ENCODE measurements at regions of chr7 and their contacts with region 1.

Region 1: GRCh38 chr7:48088559-48089045 is 463 bp upstream of the UPP1 start:
- DNase-seq: peak; percentile 90
- ATAC-seq: peak; percentile 31
- H3K4me3 ChIP-seq: peak overlapping the region; percentile 91
- H3K27ac ChIP-seq: peak overlapping the region; percentile 94
- H3K4me1 ChIP-seq: peaks cover 22% of the 10 kb centered on the region
- H3K27me3 ChIP-seq: no peaks in the 10 kb centered on the region
- CTCF ChIP-seq: no peak
- POLR2A ChIP-seq: peak; percentile 68
- RAD21 ChIP-seq: no peak

Region 2: GRCh38 chr7:47968847-47969774 is 119.5 kb before region 1 on chr7:
- CTCF ChIA-PET with region 1: no interaction called
- POLR2A ChIA-PET with region 1: interaction called, 10 read pairs
- dilution Hi-C with region 1: no loop called
- in situ Hi-C with region 1: no loop called
- intact Hi-C with region 1: no loop called
- DNase-seq: peak; percentile 74
- ATAC-seq: peak; percentile 86
- H3K4me3 ChIP-seq: no peak overlapping the region
- H3K27ac ChIP-seq: no peak overlapping the region
- H3K4me1 ChIP-seq: peaks cover 7% of the 10 kb centered on the region; the same call in 1 of the 2 replicates
- H3K27me3 ChIP-seq: no peaks in the 10 kb centered on the region
- CTCF ChIP-seq: peak; percentile 83
- POLR2A ChIP-seq: no peak
- RAD21 ChIP-seq: peak; percentile 75

Region 3: GRCh38 chr7:47979145-47979831 is 109.3 kb before region 1 on chr7 and contains the start of gene HUS1:
- CTCF ChIA-PET with region 1: no interaction called
- POLR2A ChIA-PET with region 1: no interaction called
- dilution Hi-C with region 1: no loop called
- in situ Hi-C with region 1: loop called (anchors 10 kb)
- intact Hi-C with region 1: loop called (anchors 1 kb)
- DNase-seq: peak; percentile 81
- ATAC-seq: peak; percentile 100
- H3K4me3 ChIP-seq: peak within 1 kb of the TSS; percentile 84
- H3K27ac ChIP-seq: peak within 1 kb of the TSS; percentile 95
- H3K4me1 ChIP-seq: peaks cover 3% of the 10 kb centered on the region
- H3K27me3 ChIP-seq: peaks cover 2% of the 10 kb centered on the region; the same call in 1 of the 2 replicates
- CTCF ChIP-seq: no peak
- POLR2A ChIP-seq: peak; percentile 90
- RAD21 ChIP-seq: no peak
- total RNA-seq, gene HUS1: 18.3 and 31.9 TPM in 2 replicates

Region 4: DNA sequence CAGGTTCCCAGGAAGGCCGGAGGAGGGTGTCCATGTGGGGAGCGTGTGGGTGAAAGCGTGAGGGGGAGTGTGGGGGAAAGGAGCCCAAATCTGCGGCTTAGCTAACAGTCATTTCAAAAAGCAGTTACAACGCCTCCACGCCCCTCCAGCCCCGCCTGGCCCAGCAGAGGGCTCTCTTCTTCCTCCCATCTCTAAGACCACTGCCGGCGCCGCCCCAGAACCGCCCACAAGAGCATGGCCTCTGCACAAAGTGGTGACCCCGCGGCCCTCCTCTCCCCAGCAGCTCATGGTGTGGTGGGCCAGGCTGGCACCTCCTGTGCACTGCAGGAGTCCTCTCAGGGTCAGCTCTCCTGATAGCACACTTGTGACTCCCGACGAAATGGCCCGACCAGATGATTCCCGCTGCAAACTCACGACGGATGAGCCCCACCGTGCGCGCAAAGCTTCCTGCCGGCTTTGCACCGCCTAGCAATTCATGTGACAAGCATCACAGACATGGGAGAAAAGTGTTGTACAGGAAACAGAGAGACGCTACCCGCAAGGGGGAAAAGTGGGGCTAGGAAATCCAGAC is 96.8 kb before region 1 on chr7:
- CTCF ChIA-PET with region 1: interaction called, 4 read pairs
- POLR2A ChIA-PET with region 1: no interaction called
- dilution Hi-C with region 1: no loop called
- in situ Hi-C with region 1: loop called (anchors 10 kb)
- intact Hi-C with region 1: loop called (anchors 5 kb)
- DNase-seq: peak; percentile 51
- ATAC-seq: peak; percentile 100
- H3K4me3 ChIP-seq: peak overlapping the region; percentile 44
- H3K27ac ChIP-seq: no peak overlapping the region; the same call in 1 of the 2 replicates
- H3K4me1 ChIP-seq: no peaks in the 10 kb centered on the region; the same call in 1 of the 2 replicates
- H3K27me3 ChIP-seq: no peaks in the 10 kb centered on the region; the same call in 1 of the 2 replicates
- CTCF ChIP-seq: peak; percentile 70
- POLR2A ChIP-seq: no peak
- RAD21 ChIP-seq: peak; percentile 73

Region 5: GRCh38 chr7:48035301-48035966 is 53.2 kb before region 1 on chr7 and contains the start of gene C7orf57:
- CTCF ChIA-PET with region 1: no interaction called
- POLR2A ChIA-PET with region 1: no interaction called
- dilution Hi-C with region 1: no loop called
- in situ Hi-C with region 1: no loop called
- intact Hi-C with region 1: loop called (anchors 2 kb)
- DNase-seq: peak; percentile 77
- ATAC-seq: peak; percentile 100
- H3K4me3 ChIP-seq: peak within 1 kb of the TSS; percentile 33
- H3K27ac ChIP-seq: no peak within 1 kb of the TSS
- H3K4me1 ChIP-seq: no peaks in the 10 kb centered on the region
- H3K27me3 ChIP-seq: peaks cover 18% of the 10 kb centered on the region
- CTCF ChIP-seq: peak; percentile 27; the same call in 1 of the 2 replicates
- POLR2A ChIP-seq: no peak
- RAD21 ChIP-seq: no peak
- total RNA-seq, gene C7orf57: not detected in 2 replicates

Region 6: GRCh38 chr7:48052748-48053147 is 35.9 kb before region 1 on chr7:
- CTCF ChIA-PET with region 1: no interaction called
- POLR2A ChIA-PET with region 1: no interaction called
- dilution Hi-C with region 1: no loop called
- in situ Hi-C with region 1: no loop called
- intact Hi-C with region 1: no loop called
- DNase-seq: peak; percentile 82
- ATAC-seq: no peak
- H3K4me3 ChIP-seq: no peak overlapping the region
- H3K27ac ChIP-seq: no peak overlapping the region
- H3K4me1 ChIP-seq: peaks cover 2% of the 10 kb centered on the region
- H3K27me3 ChIP-seq: no peaks in the 10 kb centered on the region
- CTCF ChIP-seq: no peak
- POLR2A ChIP-seq: no peak
- RAD21 ChIP-seq: no peak

Region 7: DNA sequence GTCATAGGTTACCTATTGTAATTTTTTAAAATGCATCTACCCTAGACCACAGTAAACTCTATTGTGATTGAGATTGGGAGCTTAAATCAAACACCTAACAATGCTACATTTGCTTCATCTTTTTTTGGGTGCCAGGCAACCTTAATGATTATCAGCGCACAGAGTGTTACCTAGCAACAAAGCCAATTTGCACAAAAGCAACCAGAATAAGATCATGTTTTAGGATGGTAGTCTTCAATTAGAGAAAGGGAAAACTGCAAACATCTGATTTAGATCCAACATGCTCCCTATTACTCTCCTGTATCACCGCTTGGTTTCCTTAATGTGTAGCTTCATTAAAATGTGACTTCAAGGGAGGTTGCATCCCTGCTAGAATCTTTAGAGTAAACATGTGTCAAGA is 309.6 kb after region 1 on chr7:
- CTCF ChIA-PET with region 1: no interaction called
- POLR2A ChIA-PET with region 1: no interaction called
- dilution Hi-C with region 1: no loop called
- in situ Hi-C with region 1: no loop called
- intact Hi-C with region 1: no loop called
- DNase-seq: no peak
- ATAC-seq: no peak
- H3K4me3 ChIP-seq: no peak overlapping the region
- H3K27ac ChIP-seq: no peak overlapping the region
- H3K4me1 ChIP-seq: no peaks in the 10 kb centered on the region
- H3K27me3 ChIP-seq: no peaks in the 10 kb centered on the region
- CTCF ChIP-seq: no peak
- POLR2A ChIP-seq: no peak
- RAD21 ChIP-seq: no peak

Measured in IMR-90 (cell line).